Activated CD4-positive, alpha-beta T cell treated with anti-CD3 and anti-CD28 coated beads, Interleukin-2, amount 10 ng/mL, durations not matched to agents 24 days and 14 days (primary cell): ENCODE measurements at regions of chr14 and their contacts with region 1.

Region 1: DNA sequence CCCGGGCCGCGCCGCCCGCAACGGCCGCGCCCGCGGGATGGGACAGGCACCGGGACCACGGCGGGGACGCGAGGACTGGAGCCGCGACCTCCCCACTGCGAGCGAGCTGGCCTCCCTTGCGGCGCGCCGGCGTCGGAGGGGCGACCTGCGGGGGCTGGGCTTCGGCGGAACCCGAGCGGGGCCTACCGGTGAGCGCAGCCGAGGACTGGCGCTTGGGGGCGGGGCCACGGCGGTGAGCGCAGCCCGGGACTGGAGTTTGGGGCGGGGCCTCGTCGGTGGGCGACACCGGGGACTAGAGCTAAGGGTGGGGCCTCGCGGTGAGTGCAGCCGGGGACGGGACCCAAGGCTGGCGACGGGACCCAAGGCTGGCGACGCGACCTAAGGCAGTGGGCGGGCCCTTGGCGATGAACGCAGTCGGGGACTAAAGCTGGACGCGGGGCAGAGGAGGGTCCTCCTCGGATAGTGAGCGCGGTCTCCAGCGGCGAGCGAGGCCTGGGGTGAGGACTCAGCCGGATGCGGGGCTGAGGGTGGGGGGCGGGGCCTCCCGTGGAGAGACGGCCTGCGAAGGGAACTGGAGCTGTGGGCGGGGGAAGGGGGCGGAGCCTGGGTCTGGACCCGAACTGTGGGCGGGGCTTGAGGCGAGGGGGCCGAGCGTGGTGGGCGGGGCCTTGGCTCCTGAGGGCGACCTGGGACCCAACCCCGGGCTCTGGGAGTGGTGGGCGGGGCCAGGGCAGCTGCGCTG is at the start of gene BRF1:
- DNase-seq: peak; percentile 99
- H3K4me3 Mint-ChIP-seq: peak within 1 kb of the TSS; percentile 91
- H3K27ac Mint-ChIP-seq: peak within 1 kb of the TSS; percentile 94
- H3K4me1 Mint-ChIP-seq: peaks cover 28% of the 10 kb centered on the region
- H3K27me3 Mint-ChIP-seq: no peaks in the 10 kb centered on the region
- total RNA-seq, gene BRF1: 42.4 and 46.6 TPM in 2 replicates

Region 2: DNA sequence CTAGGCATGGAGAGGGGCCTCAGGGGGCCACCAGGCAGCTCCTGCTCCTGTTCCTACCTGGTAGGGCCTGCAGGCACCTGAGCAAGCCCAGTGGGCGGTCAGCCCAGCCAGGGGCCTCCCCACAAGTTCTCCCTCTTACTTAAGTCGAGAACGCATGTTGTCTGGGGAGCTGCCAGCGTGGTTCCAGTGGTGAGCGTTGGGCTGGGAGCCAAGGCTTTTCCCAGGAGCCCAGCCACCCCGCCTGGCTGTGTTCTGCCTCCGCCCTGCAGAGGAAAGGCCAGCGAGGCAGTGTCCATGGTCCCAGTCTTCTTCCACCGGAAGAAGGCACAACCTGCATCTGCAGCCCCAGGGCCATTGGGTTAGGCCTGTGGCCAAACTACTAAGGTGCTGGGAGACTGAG is 720.0 kb before region 1 on chr14:
- intact Hi-C with region 1: no loop called
- DNase-seq: no peak
- H3K4me3 Mint-ChIP-seq: no peak overlapping the region
- H3K27ac Mint-ChIP-seq: no peak overlapping the region
- H3K4me1 Mint-ChIP-seq: no peaks in the 10 kb centered on the region
- H3K27me3 Mint-ChIP-seq: no peaks in the 10 kb centered on the region

Region 3: GRCh38 chr14:104870420-104871144 is 430.4 kb before region 1 on chr14:
- intact Hi-C with region 1: no loop called
- DNase-seq: peak; percentile 83
- H3K4me3 Mint-ChIP-seq: no peak overlapping the region
- H3K27ac Mint-ChIP-seq: no peak overlapping the region
- H3K4me1 Mint-ChIP-seq: no peaks in the 10 kb centered on the region
- H3K27me3 Mint-ChIP-seq: peaks cover 2% of the 10 kb centered on the region

Region 4: GRCh38 chr14:105314287-105315200 is 13.6 kb after region 1 on chr14 and contains the start of gene PACS2:
- intact Hi-C with region 1: loop called (anchors 1 kb)
- DNase-seq: peak; percentile 95
- H3K4me3 Mint-ChIP-seq: peak within 1 kb of the TSS; percentile 89
- H3K27ac Mint-ChIP-seq: peak within 1 kb of the TSS; percentile 81
- H3K4me1 Mint-ChIP-seq: peaks cover 21% of the 10 kb centered on the region
- H3K27me3 Mint-ChIP-seq: peaks cover 3% of the 10 kb centered on the region
- total RNA-seq, gene PACS2: 31.5 and 33.9 TPM in 2 replicates